HEK293T (cell line): ENCODE measurements at regions of chr6 and their contacts with region 1.

Region 1: GRCh38 chr6:104969785-104970581 is 13.1 kb downstream of the LIN28B start:
- DNase-seq: no peak

Region 2: DNA sequence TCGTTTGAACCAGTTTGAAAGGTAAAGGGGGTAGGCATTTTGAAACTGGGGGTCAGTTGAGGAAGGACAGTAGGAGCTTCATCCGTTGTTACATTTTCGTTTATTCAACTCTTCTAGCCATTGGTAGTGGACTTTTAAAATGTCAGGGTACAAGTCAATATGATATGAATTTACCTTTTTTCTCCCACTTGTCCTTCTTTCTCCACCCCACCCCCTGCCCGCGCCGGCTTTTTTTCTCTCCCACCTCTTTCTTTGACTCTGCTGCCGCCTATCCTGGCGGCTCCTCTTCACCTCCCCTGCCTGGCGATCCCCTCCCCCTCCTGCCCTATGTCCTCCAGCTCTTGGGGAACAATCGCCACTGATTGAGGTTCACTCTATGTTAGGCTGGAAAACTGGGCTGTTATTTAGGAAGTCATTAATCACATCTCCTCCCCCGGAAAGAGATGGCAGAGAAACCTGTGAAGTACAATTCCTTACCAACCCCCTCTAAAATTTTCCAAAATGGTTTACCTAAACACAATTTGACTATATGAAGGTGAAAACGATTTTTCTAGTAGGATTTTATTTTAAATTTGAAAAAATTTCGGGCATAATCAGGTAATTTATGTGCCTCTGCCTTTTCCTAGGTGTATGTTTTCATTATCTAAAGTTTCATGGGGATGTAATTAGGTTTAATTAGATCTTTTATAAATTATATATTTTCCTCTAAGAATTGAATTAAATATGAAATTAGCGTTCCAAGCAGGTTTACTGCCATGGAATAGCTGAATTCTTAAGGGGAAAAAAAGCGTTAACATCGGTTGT is 13.9 kb before region 1 on chr6:
- CTCF ChIA-PET with region 1: interaction called, 6 read pairs
- POLR2A ChIA-PET with region 1: interaction called, 33 read pairs
- DNase-seq: peak; percentile 46